Heart right ventricle (tissue), 16 donors: ENCODE measurements at regions of chr3 and their contacts with region 1.

Region 1: GRCh38 chr3:192566706-192567290 is 160.5 kb downstream of the FGF12 start:
- DNase-seq: peak; percentile 38 to 81
- ATAC-seq: peak in 7 of 8 donors; percentile 59 to 80 (median 71)
- H3K4me3 ChIP-seq: peak overlapping the region in 1 of 10 donors; percentile 19
- H3K27ac ChIP-seq: peak overlapping the region in 4 of 10 donors; percentile 14 to 57 (median 18)
- H3K4me1 ChIP-seq: peaks cover 0 to 21% (median 12%) of the 10 kb centered on the region in 9 donors
- H3K27me3 ChIP-seq: peaks cover 0 to 9% (median 0%) of the 10 kb centered on the region in 7 donors
- CTCF ChIP-seq: peak; percentile 70 to 90 (median 82)

Region 2: DNA sequence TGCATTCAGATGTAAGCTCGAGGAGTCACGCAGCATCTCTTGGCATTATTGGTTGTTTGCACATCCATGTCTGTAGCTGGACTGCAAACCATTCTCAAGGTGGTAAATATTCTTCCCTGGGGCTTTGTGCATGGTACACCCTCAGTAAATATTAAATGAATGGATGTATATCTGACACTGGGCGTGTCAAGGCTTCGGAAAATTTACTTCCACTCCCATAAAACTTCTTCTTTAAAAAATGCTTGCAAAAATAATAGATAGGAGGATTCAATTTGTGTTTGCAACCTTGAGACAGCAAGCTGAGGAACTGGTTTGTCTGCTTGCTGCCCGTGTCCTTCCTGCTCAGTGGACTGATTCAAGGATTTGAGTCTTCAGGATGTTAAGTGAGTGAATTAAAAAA is 293.3 kb before region 1 on chr3:
- intact Hi-C with region 1: no loop called
- DNase-seq: no peak
- ATAC-seq: no peak
- H3K4me3 ChIP-seq: no peak overlapping the region
- H3K27ac ChIP-seq: no peak overlapping the region
- H3K4me1 ChIP-seq: peaks cover 0 to 4% (median 0%) of the 10 kb centered on the region in 9 donors
- H3K27me3 ChIP-seq: no peaks in the 10 kb centered on the region
- CTCF ChIP-seq: no peak

Region 3: DNA sequence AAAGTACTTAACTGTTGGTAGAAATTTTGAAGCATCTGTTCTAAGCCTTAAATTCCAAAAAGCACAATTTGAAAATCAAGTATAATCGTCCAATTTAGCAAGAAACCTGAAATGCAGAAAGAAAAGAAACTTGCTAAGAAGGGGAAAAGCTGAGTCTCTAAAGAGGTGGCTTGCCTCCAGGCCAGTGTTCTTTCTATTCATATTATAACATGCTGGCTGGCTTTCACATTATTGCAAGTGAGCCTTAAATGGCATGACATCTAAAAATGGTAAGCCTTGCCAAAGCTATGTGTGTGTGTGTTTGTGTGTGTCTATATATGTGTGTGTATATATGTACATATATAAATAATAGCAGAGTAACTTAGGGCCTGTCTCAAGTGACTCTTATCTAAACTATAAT is 71.0 kb after region 1 on chr3:
- intact Hi-C with region 1: loop called in 1 of 10 experiments (anchors 2 kb)
- DNase-seq: no peak
- ATAC-seq: peak in 5 of 8 donors; percentile 23 to 58 (median 53)
- H3K4me3 ChIP-seq: no peak overlapping the region
- H3K27ac ChIP-seq: peak overlapping the region; percentile 64 to 88 (median 82)
- H3K4me1 ChIP-seq: peaks cover 0 to 24% (median 6%) of the 10 kb centered on the region in 9 donors
- H3K27me3 ChIP-seq: no peaks in the 10 kb centered on the region
- CTCF ChIP-seq: no peak

Region 4: DNA sequence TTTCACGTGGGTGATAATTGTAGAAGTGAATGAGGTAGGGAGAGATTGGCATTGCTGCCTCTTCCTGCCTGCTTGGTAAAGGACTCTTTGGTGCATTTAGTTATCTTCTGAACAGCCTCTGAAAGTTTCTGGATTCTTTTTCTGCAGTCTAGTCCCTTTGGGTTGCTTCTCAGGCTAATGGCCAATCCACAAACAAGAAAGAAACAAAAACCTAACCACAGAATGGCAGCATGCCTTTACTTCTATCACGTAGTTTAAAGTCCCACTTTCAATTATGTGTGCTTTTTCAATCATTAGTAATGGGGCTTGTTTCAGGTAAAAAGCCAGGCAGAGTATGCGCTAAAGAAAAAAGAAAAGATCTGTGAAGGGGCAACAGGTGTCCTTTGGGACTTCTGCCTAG is 153.2 kb after region 1 on chr3:
- intact Hi-C with region 1: loop called in 4 of 10 experiments (anchors 5 to 10 kb)
- DNase-seq: no peak
- ATAC-seq: no peak
- H3K4me3 ChIP-seq: no peak overlapping the region
- H3K27ac ChIP-seq: peak overlapping the region in 4 of 10 donors; percentile 2 to 36 (median 20)
- H3K4me1 ChIP-seq: peaks cover 0 to 20% (median 0%) of the 10 kb centered on the region in 9 donors
- H3K27me3 ChIP-seq: no peaks in the 10 kb centered on the region
- CTCF ChIP-seq: no peak

Region 5: GRCh38 chr3:192772240-192772894 is 205.6 kb after region 1 on chr3:
- intact Hi-C with region 1: loop called in 5 of 10 experiments (anchors 2 to 10 kb)
- DNase-seq: peak; percentile 42 to 44
- ATAC-seq: peak in 7 of 8 donors; percentile 67 to 94 (median 84)
- H3K4me3 ChIP-seq: no peak overlapping the region
- H3K27ac ChIP-seq: no peak overlapping the region
- H3K4me1 ChIP-seq: no peaks in the 10 kb centered on the region
- H3K27me3 ChIP-seq: no peaks in the 10 kb centered on the region
- CTCF ChIP-seq: peak; percentile 20 to 69 (median 56)

Region 6: GRCh38 chr3:193040836-193041672 is 474.3 kb after region 1 on chr3:
- intact Hi-C with region 1: loop called in 2 of 10 experiments (anchors 10 kb)
- DNase-seq: peak in 1 of 2 donors; percentile 11
- ATAC-seq: peak in 5 of 8 donors; percentile 23 to 65 (median 48)
- H3K4me3 ChIP-seq: no peak overlapping the region
- H3K27ac ChIP-seq: no peak overlapping the region
- H3K4me1 ChIP-seq: no peaks in the 10 kb centered on the region
- H3K27me3 ChIP-seq: no peaks in the 10 kb centered on the region
- CTCF ChIP-seq: peak; percentile 16 to 76 (median 58)

Region 7: GRCh38 chr3:193572426-193572908 is 1005.7 kb after region 1 on chr3:
- intact Hi-C with region 1: loop called in 7 of 10 experiments (anchors 5 to 10 kb)
- DNase-seq: peak in 1 of 2 donors; percentile 49
- ATAC-seq: peak in 7 of 8 donors; percentile 38 to 76 (median 65)
- H3K4me3 ChIP-seq: no peak overlapping the region
- H3K27ac ChIP-seq: no peak overlapping the region
- H3K4me1 ChIP-seq: no peaks in the 10 kb centered on the region
- H3K27me3 ChIP-seq: peaks cover 0 to 3% (median 0%) of the 10 kb centered on the region in 7 donors
- CTCF ChIP-seq: peak; percentile 56 to 87 (median 78)